PC-3 (cell line): ENCODE measurements at regions of chr2 and their contacts with region 1.

Region 1: GRCh38 chr2:112881217-112881985 is 29.6 kb upstream of the IL37 start:
- DNase-seq: peak; percentile 85
- ATAC-seq: peak; percentile 60
- H3K4me3 ChIP-seq: no peak overlapping the region
- H3K27ac ChIP-seq: peak overlapping the region; percentile 99
- H3K4me1 ChIP-seq: peaks cover 53% of the 10 kb centered on the region
- H3K27me3 ChIP-seq: no peaks in the 10 kb centered on the region
- CTCF ChIP-seq: no peak

Region 2: DNA sequence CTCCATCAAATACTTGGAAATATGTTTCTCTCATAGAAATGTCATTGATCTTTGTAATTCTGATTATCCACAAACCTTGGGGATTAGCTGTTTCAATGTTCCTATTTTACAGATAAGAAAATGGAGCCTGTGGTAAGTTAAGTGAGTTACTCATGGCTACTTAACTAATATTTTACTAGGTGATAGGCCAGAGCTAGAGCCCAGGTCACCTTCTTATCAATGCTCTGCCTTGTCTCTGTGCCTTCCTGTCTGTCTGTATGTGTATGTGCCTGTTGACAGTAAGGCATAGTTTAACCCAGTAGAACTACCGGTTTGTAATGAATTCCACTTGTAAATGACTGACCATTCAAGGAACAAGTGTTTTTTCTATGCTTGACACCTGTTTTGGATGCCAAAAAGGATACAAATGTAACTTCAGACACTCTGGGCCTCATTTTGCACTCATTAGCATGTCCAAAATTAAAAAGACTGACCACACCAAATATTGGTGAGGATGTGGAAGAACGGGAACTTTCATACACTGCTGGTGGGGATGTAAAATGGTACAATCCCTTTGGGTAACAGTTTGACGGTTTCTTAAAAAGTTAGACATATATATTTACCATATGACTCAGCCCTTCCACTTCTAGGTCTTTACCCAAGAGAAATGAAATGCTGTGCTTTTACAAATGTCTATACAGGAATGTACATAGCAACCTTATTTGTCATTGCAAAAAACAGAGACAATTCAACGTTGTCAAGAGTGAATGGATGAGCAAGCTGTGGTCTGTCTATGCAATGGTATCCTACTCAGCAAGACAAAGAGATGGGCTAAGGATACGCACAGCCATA is 77.5 kb before region 1 on chr2:
- CTCF ChIA-PET with region 1: no interaction called
- POLR2A ChIA-PET with region 1: no interaction called
- intact Hi-C with region 1: loop called (anchors 1 kb)
- DNase-seq: peak; percentile 96
- ATAC-seq: peak; percentile 98
- H3K4me3 ChIP-seq: peak overlapping the region; percentile 19; the same call in 1 of the 2 replicates
- H3K27ac ChIP-seq: peak overlapping the region; percentile 93
- H3K4me1 ChIP-seq: peaks cover 26% of the 10 kb centered on the region
- H3K27me3 ChIP-seq: no peaks in the 10 kb centered on the region
- CTCF ChIP-seq: no peak

Region 3: DNA sequence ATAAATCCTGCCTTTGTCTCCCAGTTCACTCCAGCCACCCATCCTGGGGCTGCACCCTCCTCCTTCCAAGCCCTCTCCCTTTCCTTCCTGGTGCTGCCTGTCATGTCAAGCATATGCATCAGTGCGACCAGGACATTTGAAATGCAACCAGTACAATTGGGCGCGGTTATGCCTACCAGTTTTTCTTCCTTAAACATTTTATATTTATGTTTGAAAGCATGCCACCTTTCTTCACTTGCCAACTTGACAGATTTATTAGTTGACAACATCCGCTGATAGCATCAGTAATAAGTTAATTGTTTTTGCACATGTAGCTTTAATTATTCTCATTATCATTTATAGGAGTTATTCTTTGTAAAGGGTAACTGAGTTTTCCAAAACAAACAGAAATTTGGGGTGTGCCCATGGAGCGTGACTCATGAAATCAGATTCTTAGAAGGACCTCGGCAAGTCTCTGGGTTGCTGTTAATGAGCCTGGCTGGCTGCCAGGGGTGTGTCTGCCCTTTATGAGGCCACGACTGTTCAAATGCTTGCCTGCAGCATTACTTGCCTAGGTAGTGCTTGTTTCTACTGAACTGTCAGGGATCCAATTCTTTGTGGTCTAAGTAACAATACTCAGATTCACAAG is 12.0 kb before region 1 on chr2:
- CTCF ChIA-PET with region 1: no interaction called
- POLR2A ChIA-PET with region 1: no interaction called
- intact Hi-C with region 1: loop called (anchors 1 kb)
- DNase-seq: peak; percentile 98
- ATAC-seq: peak; percentile 94
- H3K4me3 ChIP-seq: peak overlapping the region; percentile 13; the same call in 1 of the 2 replicates
- H3K27ac ChIP-seq: peak overlapping the region; percentile 86
- H3K4me1 ChIP-seq: peaks cover 24% of the 10 kb centered on the region
- H3K27me3 ChIP-seq: no peaks in the 10 kb centered on the region
- CTCF ChIP-seq: no peak